H1 (cell line): ENCODE measurements at regions of chr1 and their contacts with region 1.

Region 1: GRCh38 chr1:154741741-154742495 is 128.2 kb downstream of the KCNN3 start:
- DNase-seq: peak; percentile 56 to 85
- H3K4me3 ChIP-seq: no peak overlapping the region
- H3K27ac ChIP-seq: no peak overlapping the region
- H3K4me1 ChIP-seq: peaks cover 0 to 17% (median 11%) of the 10 kb centered on the region in 4 experiments; a peak in 6 of 7 replicates
- H3K27me3 ChIP-seq: no peaks in the 10 kb centered on the region
- CTCF ChIP-seq: peak; percentile 98 to 99 (median 98)
- EP300 ChIP-seq: no peak
- POLR2A ChIP-seq: no peak
- RAD21 ChIP-seq: peak; percentile 69 to 76

Region 2: GRCh38 chr1:154720328-154721297 is 21.3 kb before region 1 on chr1:
- CTCF ChIA-PET with region 1: interaction called, 10 read pairs
- POLR2A ChIA-PET with region 1: no interaction called
- DNase-seq: no peak
- H3K4me3 ChIP-seq: no peak overlapping the region
- H3K27ac ChIP-seq: no peak overlapping the region
- H3K4me1 ChIP-seq: no peaks in the 10 kb centered on the region
- H3K27me3 ChIP-seq: no peaks in the 10 kb centered on the region
- CTCF ChIP-seq: no peak
- EP300 ChIP-seq: no peak
- POLR2A ChIP-seq: no peak
- RAD21 ChIP-seq: no peak

Region 3: DNA sequence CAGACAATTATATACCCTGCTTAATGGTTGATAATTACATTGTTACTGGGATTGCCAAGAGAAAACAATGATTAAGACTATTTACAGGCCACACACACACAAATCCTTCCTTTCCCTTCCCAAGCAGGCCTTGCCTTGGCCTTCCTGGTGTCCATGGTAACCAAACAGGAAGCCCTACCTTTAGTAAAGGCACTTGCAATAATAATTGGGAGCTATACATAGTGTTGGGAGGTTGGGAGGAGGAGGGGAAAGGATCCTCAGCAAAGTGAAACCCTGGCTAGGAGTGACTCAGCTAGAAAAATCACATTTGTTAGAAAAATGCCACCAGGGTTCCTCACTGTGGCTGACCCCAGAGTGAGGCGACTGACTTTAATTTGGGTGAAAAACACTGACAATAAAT is 11.7 kb before region 1 on chr1:
- CTCF ChIA-PET with region 1: interaction called, 19 read pairs
- POLR2A ChIA-PET with region 1: interaction called, 4 read pairs
- DNase-seq: no peak
- H3K4me3 ChIP-seq: no peak overlapping the region
- H3K27ac ChIP-seq: no peak overlapping the region
- H3K4me1 ChIP-seq: peaks cover 3 to 17% (median 8%) of the 10 kb centered on the region in 4 experiments; a peak in 6 of 7 replicates
- H3K27me3 ChIP-seq: no peaks in the 10 kb centered on the region
- CTCF ChIP-seq: no peak
- EP300 ChIP-seq: no peak
- POLR2A ChIP-seq: no peak
- RAD21 ChIP-seq: no peak